AG04449 (cell line): ENCODE measurements at regions of chr11 and their contacts with region 1.

Region 1: GRCh38 chr11:27183672-27184457 is 143.2 kb downstream of the BBOX1 start:
- DNase-seq: peak; percentile 38
- H3K4me3 ChIP-seq: no peak overlapping the region
- CTCF ChIP-seq: peak; percentile 47

Region 2: DNA sequence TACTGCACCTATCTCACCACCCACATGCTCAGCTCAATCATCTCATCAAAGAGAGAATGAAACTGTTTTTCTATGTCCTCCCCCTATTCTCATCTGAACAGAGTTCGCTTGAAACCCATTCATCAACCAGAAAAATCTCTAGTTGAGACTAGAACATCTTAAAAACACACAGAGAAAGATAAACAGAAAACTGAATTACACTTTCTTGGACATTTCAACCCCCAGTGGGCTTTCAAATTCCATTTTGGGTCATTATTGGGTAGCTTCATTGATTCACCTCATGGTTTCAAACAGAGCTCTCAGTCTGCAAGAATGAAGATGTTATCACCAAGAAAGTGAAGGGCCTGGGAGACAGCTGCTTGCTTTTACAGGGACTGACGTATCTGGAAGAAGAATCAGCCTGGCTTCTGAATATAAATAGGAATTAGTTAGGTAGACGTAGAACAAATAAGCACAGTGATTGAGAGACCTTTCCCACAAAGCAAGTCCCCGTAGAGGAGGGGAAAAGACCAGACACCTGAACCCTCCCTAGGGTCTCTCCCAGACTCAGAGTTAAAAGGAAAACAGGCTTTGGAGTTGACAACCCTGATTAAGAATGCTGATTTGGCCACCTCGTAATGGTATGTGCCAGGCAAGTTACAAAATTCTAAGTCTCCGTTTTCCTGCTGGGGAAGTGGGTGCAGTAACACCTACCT is 12.5 kb after region 1 on chr11:
- CTCF ChIA-PET with region 1: interaction called, 39 read pairs
- POLR2A ChIA-PET with region 1: no interaction called
- DNase-seq: peak; percentile 67
- H3K4me3 ChIP-seq: no peak overlapping the region
- CTCF ChIP-seq: no peak

Region 3: GRCh38 chr11:27201454-27202236 is 17.8 kb after region 1 on chr11:
- CTCF ChIA-PET with region 1: interaction called, 39 read pairs
- POLR2A ChIA-PET with region 1: no interaction called
- DNase-seq: no peak
- H3K4me3 ChIP-seq: no peak overlapping the region
- CTCF ChIP-seq: no peak

Region 4: GRCh38 chr11:27472398-27473016 is 288.6 kb after region 1 on chr11 and contains the start of gene LGR4:
- CTCF ChIA-PET with region 1: interaction called, 17 read pairs
- POLR2A ChIA-PET with region 1: no interaction called
- DNase-seq: peak; percentile 72
- H3K4me3 ChIP-seq: peak within 1 kb of the TSS; percentile 75
- CTCF ChIP-seq: no peak